Common myeloid progenitor, CD34-positive (primary cell): ENCODE measurements at regions of chr20 and their contacts with region 1.

Region 1: GRCh38 chr20:40990542-40991120 is 38.0 kb upstream of the TOP1 start:
- DNase-seq: peak; percentile 72 to 81 (median 78)
- H3K4me3 ChIP-seq: peak overlapping the region in 4 of 7 experiments; percentile 27 to 48 (median 38)
- H3K27ac ChIP-seq: peak overlapping the region in 1 of 2 experiments; percentile 45
- H3K4me1 ChIP-seq: peaks cover 15 to 33% (median 24%) of the 10 kb centered on the region in 4 experiments
- H3K27me3 ChIP-seq: no peaks in the 10 kb centered on the region

Region 2: DNA sequence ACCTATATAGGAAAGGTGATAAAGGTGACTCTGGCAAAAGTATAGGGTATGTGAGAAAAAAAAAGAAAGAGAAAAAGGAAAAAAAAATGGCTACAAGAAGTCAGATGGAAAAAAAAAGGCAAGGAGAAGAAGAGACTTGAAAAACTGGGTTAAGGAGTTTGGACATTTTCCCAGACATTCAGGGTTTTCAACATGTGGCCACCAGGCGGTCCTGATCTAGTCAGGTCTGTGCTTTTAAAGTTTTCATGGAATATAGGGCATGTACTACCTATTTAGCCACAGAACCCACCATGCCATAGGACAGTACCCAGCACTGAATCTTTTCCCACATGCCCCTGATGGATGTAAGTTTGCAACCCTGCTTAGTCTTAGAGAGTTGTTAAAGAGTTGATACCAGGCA is 735.3 kb before region 1 on chr20:
- CTCF ChIA-PET with region 1: no interaction called
- POLR2A ChIA-PET with region 1: no interaction called
- DNase-seq: no peak
- H3K4me3 ChIP-seq: no peak overlapping the region
- H3K27ac ChIP-seq: no peak overlapping the region
- H3K4me1 ChIP-seq: peaks cover 0 to 5% (median 0%) of the 10 kb centered on the region in 4 experiments
- H3K27me3 ChIP-seq: peaks cover 0 to 6% (median 0%) of the 10 kb centered on the region in 5 experiments

Region 3: DNA sequence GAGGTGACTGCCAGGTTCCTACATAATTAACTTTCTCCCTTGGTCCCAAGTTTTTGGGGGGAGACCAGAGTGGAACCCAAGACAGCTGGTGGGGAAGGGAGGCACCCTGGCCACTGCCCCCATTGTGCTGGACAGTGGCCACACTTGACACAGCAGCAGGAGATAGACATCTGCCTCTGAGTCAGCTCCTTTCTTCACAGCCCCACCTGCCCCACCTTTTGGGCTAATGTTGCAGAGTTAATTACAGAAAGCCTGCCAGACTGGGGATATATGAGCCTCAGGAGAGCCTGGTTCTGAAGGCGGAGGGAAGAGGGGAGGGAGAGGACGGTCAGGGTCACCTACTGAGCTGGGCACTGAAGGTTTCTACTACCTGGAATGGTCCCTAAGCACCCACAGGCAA is 352.2 kb before region 1 on chr20:
- CTCF ChIA-PET with region 1: no interaction called
- POLR2A ChIA-PET with region 1: no interaction called
- DNase-seq: no peak
- H3K4me3 ChIP-seq: no peak overlapping the region
- H3K27ac ChIP-seq: no peak overlapping the region
- H3K4me1 ChIP-seq: no peaks in the 10 kb centered on the region
- H3K27me3 ChIP-seq: peaks cover 0 to 12% (median 2%) of the 10 kb centered on the region in 5 experiments

Region 4: GRCh38 chr20:40970201-40970600 is 20.4 kb before region 1 on chr20:
- CTCF ChIA-PET with region 1: interaction called, 26 read pairs
- POLR2A ChIA-PET with region 1: no interaction called
- DNase-seq: no peak
- H3K4me3 ChIP-seq: no peak overlapping the region
- H3K27ac ChIP-seq: no peak overlapping the region
- H3K4me1 ChIP-seq: peaks cover 0 to 12% (median 8%) of the 10 kb centered on the region in 4 experiments
- H3K27me3 ChIP-seq: peaks cover 0 to 4% (median 0%) of the 10 kb centered on the region in 5 experiments

Region 5: GRCh38 chr20:41005361-41005729 is 14.7 kb after region 1 on chr20:
- CTCF ChIA-PET with region 1: interaction called, 96 read pairs
- POLR2A ChIA-PET with region 1: interaction called, 4 read pairs
- DNase-seq: peak in 1 of 3 donors; percentile 23
- H3K4me3 ChIP-seq: no peak overlapping the region
- H3K27ac ChIP-seq: no peak overlapping the region
- H3K4me1 ChIP-seq: peaks cover 9 to 63% (median 51%) of the 10 kb centered on the region in 4 experiments
- H3K27me3 ChIP-seq: no peaks in the 10 kb centered on the region

Region 6: GRCh38 chr20:41028348-41029148 is 37.9 kb after region 1 on chr20 and contains the start of gene TOP1:
- CTCF ChIA-PET with region 1: interaction called, 21 read pairs
- POLR2A ChIA-PET with region 1: no interaction called
- DNase-seq: peak; percentile 100
- H3K4me3 ChIP-seq: peak within 1 kb of the TSS; percentile 77 to 95 (median 89)
- H3K27ac ChIP-seq: peak within 1 kb of the TSS; percentile 95 to 98
- H3K4me1 ChIP-seq: peaks cover 25 to 47% (median 35%) of the 10 kb centered on the region in 4 experiments
- H3K27me3 ChIP-seq: no peaks in the 10 kb centered on the region

Region 7: GRCh38 chr20:41064377-41064776 is 73.7 kb after region 1 on chr20:
- CTCF ChIA-PET with region 1: interaction called, 36 read pairs
- POLR2A ChIA-PET with region 1: no interaction called
- DNase-seq: no peak
- H3K4me3 ChIP-seq: no peak overlapping the region
- H3K27ac ChIP-seq: no peak overlapping the region
- H3K4me1 ChIP-seq: peaks cover 0 to 8% (median 0%) of the 10 kb centered on the region in 4 experiments
- H3K27me3 ChIP-seq: no peaks in the 10 kb centered on the region

Region 8: GRCh38 chr20:41078329-41078728 is 87.7 kb after region 1 on chr20:
- CTCF ChIA-PET with region 1: interaction called, 34 read pairs
- POLR2A ChIA-PET with region 1: no interaction called
- DNase-seq: peak; percentile 58 to 68 (median 65)
- H3K4me3 ChIP-seq: peak overlapping the region in 2 of 7 experiments; percentile 46 to 52
- H3K27ac ChIP-seq: no peak overlapping the region
- H3K4me1 ChIP-seq: peaks cover 11 to 75% (median 29%) of the 10 kb centered on the region in 4 experiments
- H3K27me3 ChIP-seq: no peaks in the 10 kb centered on the region

Region 9: DNA sequence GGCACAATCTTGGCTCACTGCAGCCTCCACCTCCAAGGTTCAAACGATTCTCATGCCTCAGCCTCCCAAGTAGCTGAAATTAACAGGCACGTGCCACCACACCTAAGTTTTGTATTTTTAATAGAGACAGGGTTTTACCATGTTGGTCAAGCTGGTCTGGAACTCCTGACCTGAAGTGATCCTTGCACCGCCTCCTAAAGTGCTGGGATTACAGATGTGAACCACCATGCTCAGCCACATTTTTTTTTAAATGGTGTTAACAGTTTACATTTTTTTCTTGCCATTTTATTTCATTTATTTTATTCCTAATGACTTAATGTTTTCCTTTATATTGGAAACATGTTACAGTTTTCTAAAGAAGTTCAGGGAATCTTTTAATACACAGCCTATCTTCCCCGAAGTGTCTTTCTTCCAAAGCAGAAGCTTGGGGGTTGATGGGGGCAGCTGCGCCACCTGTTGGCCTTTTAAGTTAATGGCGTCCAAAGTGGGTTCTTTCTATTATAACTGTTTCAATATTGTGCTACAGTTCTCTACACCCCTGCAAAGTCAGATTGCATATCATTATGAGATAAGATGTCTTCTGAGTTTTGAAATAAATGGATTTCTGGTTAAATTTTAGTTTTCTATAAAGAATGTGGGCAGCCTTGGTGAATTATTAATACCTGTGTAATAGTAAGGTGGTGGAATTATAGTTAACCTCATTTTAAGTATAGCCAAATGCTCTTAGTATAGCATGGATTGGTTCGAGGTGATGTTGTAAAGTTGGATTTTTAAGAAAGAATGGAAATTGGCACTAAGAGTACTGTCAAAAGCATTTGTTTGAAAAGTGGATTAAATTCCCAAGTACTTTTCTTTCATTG is 104.7 kb after region 1 on chr20:
- CTCF ChIA-PET with region 1: interaction called, 156 read pairs
- POLR2A ChIA-PET with region 1: no interaction called
- DNase-seq: peak; percentile 62 to 79 (median 74)
- H3K4me3 ChIP-seq: no peak overlapping the region
- H3K27ac ChIP-seq: no peak overlapping the region
- H3K4me1 ChIP-seq: no peaks in the 10 kb centered on the region
- H3K27me3 ChIP-seq: no peaks in the 10 kb centered on the region

Region 10: DNA sequence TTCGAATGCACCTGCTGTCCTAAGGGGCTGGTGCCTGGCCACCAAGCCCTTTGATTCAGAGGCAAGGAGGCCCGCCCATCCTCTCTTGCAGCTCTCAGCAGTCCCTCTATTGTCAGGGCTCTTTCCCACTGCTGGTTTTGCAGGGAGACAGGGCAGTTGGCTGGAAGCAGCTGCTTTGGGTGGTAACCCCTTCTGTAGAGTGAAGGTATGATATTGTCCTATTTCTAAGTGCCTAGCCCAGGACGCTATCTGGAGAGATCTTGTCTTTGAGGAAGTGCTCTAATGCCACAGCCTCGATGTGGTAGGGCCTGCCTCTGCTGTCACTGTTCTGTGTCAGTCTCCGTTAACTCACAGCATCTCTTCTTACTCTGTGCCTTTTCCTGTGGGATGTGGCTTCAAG is 152.3 kb after region 1 on chr20:
- CTCF ChIA-PET with region 1: no interaction called
- POLR2A ChIA-PET with region 1: no interaction called
- DNase-seq: peak; percentile 49 to 87 (median 82)
- H3K4me3 ChIP-seq: no peak overlapping the region
- H3K27ac ChIP-seq: no peak overlapping the region
- H3K4me1 ChIP-seq: peaks cover 9 to 27% (median 24%) of the 10 kb centered on the region in 4 experiments
- H3K27me3 ChIP-seq: peaks cover 0 to 48% (median 30%) of the 10 kb centered on the region in 5 experiments